ENCODE measurements at regions of chr2 and their contacts with region 1.

Region 1: GRCh38 chr2:187453078-187453641 is 5.1 kb upstream of the CALCRL start:
- DNase-seq: peak in 2 of 4 experiments; percentile 17 to 41
- ATAC-seq: 0 out of 3 replicates have a peak, but pooled peaks have one; percentile 25
- H3K4me3 ChIP-seq: no peak overlapping the region
- H3K27ac ChIP-seq: no peak overlapping the region
- H3K4me1 ChIP-seq: no peaks in the 10 kb centered on the region
- H3K27me3 ChIP-seq: no peaks in the 10 kb centered on the region
- CTCF ChIP-seq: peak in 1 of 3 experiments; percentile 62; a peak in 3 of 6 replicates
- EP300 ChIP-seq: no peak
- POLR2A ChIP-seq: no peak
- RAD21 ChIP-seq: peak; percentile 76 to 87

Region 2: DNA sequence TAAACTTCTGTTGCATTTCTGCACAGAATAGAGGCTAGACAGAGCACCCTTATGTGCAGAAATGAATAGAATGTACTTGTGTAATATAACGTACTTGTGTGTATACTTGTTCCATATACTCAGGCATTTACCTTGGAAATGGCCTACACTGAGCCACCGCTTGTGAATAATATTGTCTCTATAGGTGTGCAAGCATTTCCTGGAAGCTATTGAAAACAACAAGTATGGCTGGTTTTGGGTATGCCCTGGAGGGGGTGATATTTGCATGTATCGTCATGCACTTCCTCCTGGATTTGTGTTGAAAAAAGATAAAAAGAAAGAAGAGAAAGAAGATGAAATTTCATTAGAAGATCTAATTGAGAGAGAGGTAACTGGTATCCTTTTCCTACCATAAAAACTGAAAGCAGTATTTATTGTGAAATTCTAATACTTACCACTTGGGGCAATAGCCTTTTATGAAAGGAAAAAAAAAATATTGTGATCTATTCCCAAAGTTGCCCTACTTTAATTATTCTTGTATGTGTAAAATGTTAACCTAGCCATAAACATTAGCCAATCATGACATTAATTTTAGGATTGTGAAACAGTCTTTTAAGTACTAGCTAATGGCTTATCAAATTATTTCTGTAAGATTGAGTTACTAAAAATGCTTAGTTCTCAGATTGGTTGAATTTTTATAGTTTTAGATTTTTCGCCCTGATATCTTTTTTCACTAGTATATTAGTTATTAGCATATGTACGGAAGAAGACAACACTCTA is 949.1 kb before region 1 on chr2:
- CTCF ChIA-PET with region 1: no interaction called
- POLR2A ChIA-PET with region 1: no interaction called
- in situ Hi-C with region 1: no loop called
- intact Hi-C with region 1: loop called (anchors 10 kb)
- DNase-seq: peak in 1 of 4 experiments; percentile 23
- ATAC-seq: peak; percentile 66
- H3K4me3 ChIP-seq: no peak overlapping the region
- H3K27ac ChIP-seq: no peak overlapping the region
- H3K4me1 ChIP-seq: no peaks in the 10 kb centered on the region
- H3K27me3 ChIP-seq: no peaks in the 10 kb centered on the region
- CTCF ChIP-seq: peak; percentile 28 to 63 (median 30); a peak in 4 of 6 replicates
- EP300 ChIP-seq: no peak
- POLR2A ChIP-seq: no peak
- RAD21 ChIP-seq: peak; percentile 64 to 81

Region 3: GRCh38 chr2:186862869-186863709 is 590.1 kb before region 1 on chr2:
- CTCF ChIA-PET with region 1: interaction called, 16 read pairs
- POLR2A ChIA-PET with region 1: no interaction called
- in situ Hi-C with region 1: no loop called
- intact Hi-C with region 1: loop called (anchors 1 kb)
- DNase-seq: peak; percentile 34 to 59 (median 36)
- ATAC-seq: peak; percentile 91
- H3K4me3 ChIP-seq: no peak overlapping the region
- H3K27ac ChIP-seq: no peak overlapping the region
- H3K4me1 ChIP-seq: no peaks in the 10 kb centered on the region
- H3K27me3 ChIP-seq: no peaks in the 10 kb centered on the region
- CTCF ChIP-seq: peak; percentile 47 to 87 (median 50); a peak in 4 of 6 replicates
- EP300 ChIP-seq: no peak
- POLR2A ChIP-seq: no peak
- RAD21 ChIP-seq: peak; percentile 90 to 94

Region 4: DNA sequence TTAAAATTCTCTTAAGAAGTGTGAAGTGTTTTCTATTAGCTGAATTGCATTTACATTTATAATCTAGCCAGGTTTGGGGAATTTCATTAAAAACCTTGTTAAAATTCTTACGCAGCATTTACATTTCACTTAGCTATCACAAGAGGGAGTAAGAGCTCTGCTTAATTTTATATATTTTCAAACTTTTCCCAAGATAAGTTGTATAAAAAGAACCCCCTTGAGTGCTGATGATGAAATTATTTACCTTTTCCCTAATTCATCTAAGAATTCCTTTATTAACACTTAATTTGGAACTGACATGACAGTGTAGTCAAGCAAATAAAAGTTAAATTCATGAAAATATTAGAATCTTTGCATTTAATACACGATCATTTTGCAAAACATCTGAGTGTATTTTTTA is 549.9 kb before region 1 on chr2:
- CTCF ChIA-PET with region 1: interaction called, 5 read pairs
- POLR2A ChIA-PET with region 1: no interaction called
- in situ Hi-C with region 1: loop called (anchors 25 kb)
- intact Hi-C with region 1: loop called (anchors 2 kb)
- DNase-seq: no peak
- ATAC-seq: 0 out of 3 replicates have a peak, but pooled peaks have one; percentile 43
- H3K4me3 ChIP-seq: no peak overlapping the region
- H3K27ac ChIP-seq: no peak overlapping the region
- H3K4me1 ChIP-seq: no peaks in the 10 kb centered on the region; a peak in 1 of 5 replicates
- H3K27me3 ChIP-seq: no peaks in the 10 kb centered on the region
- CTCF ChIP-seq: peak in 2 of 3 experiments; percentile 30 to 62; a peak in 4 of 6 replicates
- EP300 ChIP-seq: no peak
- POLR2A ChIP-seq: no peak
- RAD21 ChIP-seq: peak; percentile 40 to 60

Region 5: DNA sequence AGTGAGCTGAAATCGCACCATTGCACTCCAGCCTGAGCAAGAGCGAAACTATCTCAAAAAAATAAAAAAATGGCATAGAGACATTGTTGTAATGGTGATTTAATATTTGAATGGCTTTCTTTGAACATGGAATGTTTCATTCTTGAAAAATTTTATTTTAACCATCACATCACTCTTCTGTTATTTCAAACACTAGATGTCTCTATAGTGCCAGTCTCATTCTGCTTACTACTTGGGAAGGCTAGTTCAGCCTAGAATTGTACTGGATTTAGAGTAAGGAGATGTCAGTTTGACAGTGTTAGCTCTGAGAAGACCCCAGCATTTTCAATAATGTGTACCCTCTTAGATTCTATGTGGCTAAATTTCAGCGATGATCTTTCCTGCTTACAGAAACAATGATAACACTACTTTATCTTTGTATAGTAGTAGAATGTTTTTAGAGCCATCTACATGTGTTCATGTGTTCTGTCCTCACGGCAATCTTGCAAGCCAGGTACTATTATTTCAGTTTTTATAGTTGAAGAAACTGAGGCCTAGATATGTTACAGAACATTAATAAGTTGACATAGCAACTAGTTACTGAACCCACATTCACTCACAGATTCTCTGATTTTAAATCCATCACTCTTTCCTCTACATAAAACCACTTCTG is 461.3 kb before region 1 on chr2:
- CTCF ChIA-PET with region 1: interaction called, 5 read pairs
- POLR2A ChIA-PET with region 1: no interaction called
- in situ Hi-C with region 1: no loop called
- intact Hi-C with region 1: loop called (anchors 10 kb)
- DNase-seq: no peak
- ATAC-seq: peak; percentile 50; the same call in 1 of the 3 replicates
- H3K4me3 ChIP-seq: no peak overlapping the region
- H3K27ac ChIP-seq: no peak overlapping the region
- H3K4me1 ChIP-seq: no peaks in the 10 kb centered on the region
- H3K27me3 ChIP-seq: no peaks in the 10 kb centered on the region
- CTCF ChIP-seq: no peak
- EP300 ChIP-seq: no peak
- POLR2A ChIP-seq: no peak
- RAD21 ChIP-seq: peak in 1 of 2 experiments; percentile 38; a peak in 2 of 4 replicates

Region 6: DNA sequence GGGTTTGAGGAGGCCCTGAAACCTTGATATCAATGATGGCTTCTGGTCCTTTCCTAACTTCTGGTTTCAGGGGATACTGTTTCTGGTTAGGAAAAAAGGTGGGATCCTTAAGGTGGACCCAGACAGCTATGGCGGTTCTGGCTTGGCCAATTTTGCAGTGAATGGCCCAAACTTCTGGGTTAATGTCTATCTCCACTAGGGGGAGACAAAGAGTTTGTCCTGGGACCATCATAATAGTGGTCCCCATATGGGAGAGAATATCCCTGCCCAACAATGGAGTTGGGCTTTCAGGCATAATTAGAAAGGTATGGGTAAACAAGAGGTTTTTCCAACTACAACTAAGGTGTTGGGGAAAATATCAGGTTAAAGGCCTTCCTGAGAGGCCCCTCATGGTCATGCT is 278.6 kb before region 1 on chr2:
- CTCF ChIA-PET with region 1: no interaction called
- POLR2A ChIA-PET with region 1: no interaction called
- in situ Hi-C with region 1: no loop called
- intact Hi-C with region 1: loop called (anchors 1 kb)
- DNase-seq: peak; percentile 41 to 64 (median 56)
- ATAC-seq: peak; percentile 94
- H3K4me3 ChIP-seq: no peak overlapping the region
- H3K27ac ChIP-seq: no peak overlapping the region
- H3K4me1 ChIP-seq: no peaks in the 10 kb centered on the region
- H3K27me3 ChIP-seq: no peaks in the 10 kb centered on the region
- CTCF ChIP-seq: peak; percentile 55 to 72 (median 69); a peak in 5 of 6 replicates
- EP300 ChIP-seq: no peak
- POLR2A ChIP-seq: no peak
- RAD21 ChIP-seq: peak; percentile 32 to 54; a peak in 3 of 4 replicates

Region 7: DNA sequence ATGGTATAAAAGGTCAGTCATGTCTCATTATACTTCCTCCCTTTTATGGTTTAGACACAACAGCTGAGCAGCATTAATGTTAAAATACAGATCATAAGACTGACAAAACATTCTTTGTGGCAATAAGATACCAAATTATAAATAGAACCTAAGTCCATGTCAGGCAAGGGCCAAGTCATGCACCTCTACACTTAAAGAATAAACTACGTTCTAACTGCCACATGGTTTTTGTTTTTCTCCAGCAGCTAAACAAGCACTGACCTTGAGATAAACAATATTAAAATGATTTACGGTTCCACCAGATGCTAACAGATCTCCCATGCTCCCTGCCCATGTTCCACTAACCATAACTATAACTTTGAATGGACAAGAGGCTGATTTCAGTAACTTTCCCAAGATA is 469.7 kb after region 1 on chr2:
- CTCF ChIA-PET with region 1: no interaction called
- POLR2A ChIA-PET with region 1: no interaction called
- in situ Hi-C with region 1: no loop called
- intact Hi-C with region 1: no loop called
- DNase-seq: no peak
- ATAC-seq: no peak
- H3K4me3 ChIP-seq: no peak overlapping the region
- H3K27ac ChIP-seq: no peak overlapping the region
- H3K4me1 ChIP-seq: no peaks in the 10 kb centered on the region
- H3K27me3 ChIP-seq: no peaks in the 10 kb centered on the region
- CTCF ChIP-seq: no peak
- EP300 ChIP-seq: no peak
- POLR2A ChIP-seq: no peak
- RAD21 ChIP-seq: no peak